CD4-positive, alpha-beta memory T cell (primary cell): ENCODE measurements at regions of chr19 and their contacts with region 1.

Region 1: DNA sequence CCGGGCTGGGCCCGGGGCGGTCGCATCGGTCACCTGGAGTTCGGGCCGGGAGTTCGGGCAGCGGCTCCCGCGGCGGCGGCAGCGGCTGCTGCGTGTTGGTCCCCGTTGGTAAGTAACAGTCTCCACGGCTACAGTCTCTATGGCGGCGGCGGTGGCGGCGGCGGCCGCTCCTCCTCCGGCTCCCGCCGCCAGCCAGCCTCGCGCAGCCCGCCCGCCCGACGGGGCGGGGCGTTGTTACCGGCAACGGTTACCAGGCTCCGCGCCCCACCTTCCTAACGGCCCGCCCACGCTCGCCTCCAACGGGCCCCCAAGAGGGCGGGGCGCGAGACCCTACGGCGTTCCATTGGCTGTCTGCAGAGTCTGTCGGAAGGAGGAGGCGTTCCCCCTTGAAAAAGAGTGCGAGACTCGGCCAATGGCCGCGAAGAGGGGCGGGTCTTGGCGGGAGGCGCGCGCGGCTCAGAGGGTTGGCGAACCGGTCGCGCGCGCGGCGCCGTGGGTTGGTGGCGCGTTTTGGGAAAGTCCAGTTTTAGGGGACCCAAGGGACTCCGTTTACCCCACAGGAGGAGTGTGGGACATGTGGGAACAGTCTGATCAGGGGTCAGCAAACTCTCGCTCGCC is at the start of gene RFX2:
- DNase-seq: peak; percentile 99 to 100 (median 99)
- H3K4me3 ChIP-seq: peak within 1 kb of the TSS; percentile 52 to 55
- H3K4me3 Mint-ChIP-seq: peak within 1 kb of the TSS; percentile 90 to 97 (median 94)
- H3K27ac ChIP-seq: peak within 1 kb of the TSS; percentile 43
- H3K27ac Mint-ChIP-seq: peak within 1 kb of the TSS; percentile 93 to 97 (median 95)
- H3K4me1 ChIP-seq: peaks cover 27% of the 10 kb centered on the region
- H3K4me1 Mint-ChIP-seq: peaks cover 11 to 26% (median 23%) of the 10 kb centered on the region in 4 donors
- H3K27me3 ChIP-seq: peaks cover 4% of the 10 kb centered on the region
- H3K27me3 Mint-ChIP-seq: peaks cover 2 to 7% of the 10 kb centered on the region in 2 donors
- total RNA-seq, gene RFX2: 5.6 to 6.7 TPM

Region 2: GRCh38 chr19:6066661-6067646 is 43.5 kb before region 1 on chr19:
- CTCF ChIA-PET with region 1: no interaction called
- POLR2A ChIA-PET with region 1: no interaction called
- intact Hi-C with region 1: loop called (anchors 5 kb)
- DNase-seq: peak; percentile 30 to 64 (median 47)
- H3K4me3 ChIP-seq: no peak overlapping the region
- H3K4me3 Mint-ChIP-seq: peak overlapping the region in 6 of 8 donors; percentile 29 to 80 (median 58)
- H3K27ac ChIP-seq: peak overlapping the region; percentile 46
- H3K27ac Mint-ChIP-seq: peak overlapping the region; percentile 86 to 94 (median 90)
- H3K4me1 ChIP-seq: peaks cover 31% of the 10 kb centered on the region
- H3K4me1 Mint-ChIP-seq: peaks cover 30 to 65% (median 37%) of the 10 kb centered on the region in 4 donors
- H3K27me3 ChIP-seq: no peaks in the 10 kb centered on the region
- H3K27me3 Mint-ChIP-seq: no peaks in the 10 kb centered on the region

Region 3: GRCh38 chr19:6402837-6403608 is 292.6 kb after region 1 on chr19:
- CTCF ChIA-PET with region 1: no interaction called
- POLR2A ChIA-PET with region 1: no interaction called
- intact Hi-C with region 1: no loop called
- DNase-seq: no peak
- H3K4me3 ChIP-seq: no peak overlapping the region
- H3K4me3 Mint-ChIP-seq: no peak overlapping the region
- H3K27ac ChIP-seq: no peak overlapping the region
- H3K27ac Mint-ChIP-seq: no peak overlapping the region
- H3K4me1 ChIP-seq: no peaks in the 10 kb centered on the region
- H3K4me1 Mint-ChIP-seq: no peaks in the 10 kb centered on the region
- H3K27me3 ChIP-seq: no peaks in the 10 kb centered on the region
- H3K27me3 Mint-ChIP-seq: peaks cover 0 to 2% of the 10 kb centered on the region in 2 donors